Endothelial cell of umbilical vein (primary cell): ENCODE measurements at regions of chr3 and their contacts with region 1.

Region 1: DNA sequence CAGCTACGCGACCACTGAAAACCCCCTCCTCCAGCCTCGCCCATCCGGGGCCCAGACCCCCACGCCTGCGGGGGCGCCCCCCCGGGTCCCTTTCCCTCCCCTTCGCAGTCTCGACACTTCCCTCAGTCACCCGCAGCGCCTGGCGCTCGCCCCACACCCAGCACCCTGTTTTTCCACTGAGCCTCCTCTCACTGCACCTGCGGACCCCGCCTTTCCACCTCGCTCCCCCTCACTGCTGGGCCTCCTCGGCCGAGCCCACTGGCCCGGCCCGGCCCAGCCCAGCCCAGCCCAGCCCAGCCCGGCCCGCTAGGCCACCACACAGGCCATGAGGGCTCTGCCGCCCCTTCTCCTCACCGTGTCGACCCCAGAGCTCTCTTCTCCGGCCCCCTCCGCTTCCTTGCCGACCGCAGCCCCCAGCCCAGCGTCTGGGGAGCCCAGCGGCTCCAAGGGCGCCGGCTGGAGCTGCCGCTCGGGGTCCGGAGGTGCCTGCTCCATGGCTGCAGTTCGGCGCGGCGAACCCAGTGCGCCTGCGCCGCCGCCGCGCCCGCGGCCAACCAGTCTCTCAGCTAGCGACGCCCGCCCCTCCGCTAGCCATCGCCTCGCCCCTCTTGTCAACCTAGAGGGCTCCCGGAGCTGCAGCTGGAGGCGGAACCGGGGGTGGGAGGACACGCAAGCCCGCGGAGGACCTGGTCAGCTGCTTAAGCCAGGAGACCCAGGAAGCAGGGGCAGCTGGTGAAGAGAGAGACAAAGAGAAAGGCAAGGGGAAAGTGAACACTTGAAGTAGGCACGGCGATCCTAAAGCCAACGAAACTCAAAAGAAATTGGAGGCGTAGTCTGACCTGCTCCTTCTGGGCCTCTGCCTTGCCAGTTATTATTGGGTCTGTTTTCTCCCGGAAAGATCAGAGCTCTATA is at the start of gene SNX4:
- DNase-seq: peak; percentile 93
- H3K4me3 ChIP-seq: peak within 1 kb of the TSS; percentile 67 to 96 (median 90)
- H3K27ac ChIP-seq: peak within 1 kb of the TSS; percentile 58
- H3K4me1 ChIP-seq: peaks cover 6% of the 10 kb centered on the region
- H3K27me3 ChIP-seq: no peaks in the 10 kb centered on the region
- CTCF ChIP-seq: no peak
- POLR2A ChIP-seq: peak; percentile 57
- total RNA-seq, gene SNX4: 39.2 and 39.7 TPM in 2 replicates

Region 2: DNA sequence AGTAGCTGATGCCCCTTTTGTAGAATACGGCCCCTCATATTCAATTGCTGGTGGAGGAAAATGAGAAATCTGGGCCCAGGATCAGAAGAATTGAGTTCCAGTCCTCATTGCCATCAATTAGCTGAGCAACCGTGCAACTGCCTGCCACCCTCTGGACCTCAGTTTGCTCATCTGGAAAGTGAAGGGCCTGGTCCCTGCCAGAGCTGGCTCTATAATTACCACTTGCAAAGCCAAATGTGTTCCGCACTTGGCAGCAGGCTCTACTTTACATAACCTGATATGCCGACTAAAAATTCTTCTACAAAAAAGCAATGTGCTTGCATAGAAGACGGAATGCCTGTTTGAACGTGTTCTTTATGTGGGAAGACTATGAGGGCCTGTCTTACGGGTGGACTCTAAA is 624.2 kb before region 1 on chr3:
- CTCF ChIA-PET with region 1: no interaction called
- POLR2A ChIA-PET with region 1: no interaction called
- dilution Hi-C with region 1: no loop called
- intact Hi-C with region 1: loop called (anchors 5 kb)
- DNase-seq: no peak
- H3K4me3 ChIP-seq: no peak overlapping the region
- H3K27ac ChIP-seq: no peak overlapping the region
- H3K4me1 ChIP-seq: no peaks in the 10 kb centered on the region
- H3K27me3 ChIP-seq: no peaks in the 10 kb centered on the region
- CTCF ChIP-seq: no peak
- POLR2A ChIP-seq: no peak

Region 3: GRCh38 chr3:125107861-125108567 is 411.9 kb before region 1 on chr3:
- CTCF ChIA-PET with region 1: no interaction called
- POLR2A ChIA-PET with region 1: no interaction called
- dilution Hi-C with region 1: no loop called
- intact Hi-C with region 1: no loop called
- DNase-seq: peak; percentile 46
- H3K4me3 ChIP-seq: no peak overlapping the region
- H3K27ac ChIP-seq: no peak overlapping the region
- H3K4me1 ChIP-seq: peaks cover 9% of the 10 kb centered on the region
- H3K27me3 ChIP-seq: no peaks in the 10 kb centered on the region
- CTCF ChIP-seq: no peak
- POLR2A ChIP-seq: no peak

Region 4: GRCh38 chr3:125594581-125595011 is 74.7 kb after region 1 on chr3:
- CTCF ChIA-PET with region 1: no interaction called
- POLR2A ChIA-PET with region 1: no interaction called
- dilution Hi-C with region 1: no loop called
- intact Hi-C with region 1: loop called (anchors 2 kb)
- DNase-seq: no peak
- H3K4me3 ChIP-seq: peak overlapping the region; percentile 51 to 89 (median 58)
- H3K27ac ChIP-seq: peak overlapping the region; percentile 32
- H3K4me1 ChIP-seq: peaks cover 22% of the 10 kb centered on the region
- H3K27me3 ChIP-seq: no peaks in the 10 kb centered on the region
- CTCF ChIP-seq: no peak
- POLR2A ChIP-seq: no peak